T-cell (primary cell): ENCODE measurements at regions of chr3 and their contacts with region 1.

Region 1: GRCh38 chr3:179027326-179027900 is 44.2 kb downstream of the ZMAT3 start:
- DNase-seq: peak in 15 of 35 experiments; percentile 7 to 44 (median 18)
- ATAC-seq: peak; percentile 48 to 89 (median 74)
- H3K4me3 ChIP-seq: no peak overlapping the region
- H3K4me3 Mint-ChIP-seq: peak overlapping the region; percentile 22 to 57 (median 46)
- H3K27ac ChIP-seq: peak overlapping the region; percentile 22
- H3K27ac Mint-ChIP-seq: peak overlapping the region; percentile 95 to 96
- H3K4me1 ChIP-seq: peaks cover 11 to 23% of the 10 kb centered on the region in 2 experiments
- H3K4me1 Mint-ChIP-seq: peaks cover 26 to 29% (median 28%) of the 10 kb centered on the region in 3 donors
- H3K27me3 ChIP-seq: no peaks in the 10 kb centered on the region
- H3K27me3 Mint-ChIP-seq: no peaks in the 10 kb centered on the region

Region 2: DNA sequence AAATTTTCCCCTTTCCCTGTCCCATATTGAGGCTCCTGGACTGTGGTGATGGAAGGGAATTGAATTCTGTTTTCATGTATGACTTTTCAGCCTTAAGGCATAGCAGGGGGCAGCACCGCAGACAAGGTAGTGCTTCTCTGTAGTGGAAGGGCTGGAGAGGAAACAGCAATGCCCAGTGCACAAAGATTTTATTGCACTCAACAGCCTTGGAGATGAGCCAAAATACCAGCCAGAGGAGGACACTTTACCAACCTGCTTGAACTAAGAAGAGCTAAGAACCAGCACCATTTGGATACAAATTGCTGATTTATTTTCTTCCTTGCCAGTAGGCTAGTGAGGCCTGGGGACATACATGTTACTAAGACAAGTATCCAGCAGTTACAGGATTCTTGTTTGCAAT is 392.4 kb before region 1 on chr3:
- CTCF ChIA-PET with region 1: no interaction called
- POLR2A ChIA-PET with region 1: no interaction called
- DNase-seq: no peak
- ATAC-seq: no peak
- H3K4me3 ChIP-seq: no peak overlapping the region
- H3K4me3 Mint-ChIP-seq: no peak overlapping the region
- H3K27ac ChIP-seq: no peak overlapping the region
- H3K27ac Mint-ChIP-seq: no peak overlapping the region
- H3K4me1 ChIP-seq: no peaks in the 10 kb centered on the region
- H3K4me1 Mint-ChIP-seq: no peaks in the 10 kb centered on the region
- H3K27me3 ChIP-seq: no peaks in the 10 kb centered on the region
- H3K27me3 Mint-ChIP-seq: no peaks in the 10 kb centered on the region

Region 3: DNA sequence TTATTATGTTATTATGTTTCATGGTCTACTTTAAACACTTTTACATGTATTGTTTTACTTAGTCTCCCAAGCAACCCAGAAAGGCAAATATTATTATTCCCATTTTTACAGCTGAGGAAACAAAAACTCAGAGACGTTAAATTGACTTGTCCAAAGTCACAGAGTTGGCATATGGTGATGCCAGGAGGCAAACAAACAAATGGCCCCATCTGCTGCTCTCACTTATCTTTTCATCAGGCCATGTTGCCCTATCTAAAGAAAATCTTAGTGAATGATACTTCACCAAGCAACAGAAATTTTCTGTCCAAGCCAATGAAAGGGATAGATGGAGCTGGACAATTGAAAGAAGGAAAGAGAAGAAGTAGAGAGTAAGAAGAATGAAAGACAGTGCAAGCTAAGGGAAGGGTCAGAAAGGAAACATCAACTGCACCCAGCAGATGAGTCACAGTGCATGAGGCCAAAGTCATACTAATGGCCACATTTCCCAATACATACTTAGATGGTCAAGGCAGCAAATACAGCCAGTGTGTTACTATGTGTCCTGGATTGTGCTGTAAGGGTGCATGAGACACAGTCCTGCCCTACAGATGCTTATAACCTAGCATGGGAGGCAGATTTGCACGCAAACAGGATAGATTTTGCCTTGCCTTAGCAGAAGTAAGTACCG is 224.3 kb before region 1 on chr3:
- CTCF ChIA-PET with region 1: no interaction called
- POLR2A ChIA-PET with region 1: no interaction called
- DNase-seq: no peak
- ATAC-seq: no peak
- H3K4me3 ChIP-seq: no peak overlapping the region
- H3K4me3 Mint-ChIP-seq: no peak overlapping the region
- H3K27ac ChIP-seq: no peak overlapping the region
- H3K27ac Mint-ChIP-seq: no peak overlapping the region
- H3K4me1 ChIP-seq: no peaks in the 10 kb centered on the region
- H3K4me1 Mint-ChIP-seq: no peaks in the 10 kb centered on the region
- H3K27me3 ChIP-seq: no peaks in the 10 kb centered on the region
- H3K27me3 Mint-ChIP-seq: no peaks in the 10 kb centered on the region

Region 4: DNA sequence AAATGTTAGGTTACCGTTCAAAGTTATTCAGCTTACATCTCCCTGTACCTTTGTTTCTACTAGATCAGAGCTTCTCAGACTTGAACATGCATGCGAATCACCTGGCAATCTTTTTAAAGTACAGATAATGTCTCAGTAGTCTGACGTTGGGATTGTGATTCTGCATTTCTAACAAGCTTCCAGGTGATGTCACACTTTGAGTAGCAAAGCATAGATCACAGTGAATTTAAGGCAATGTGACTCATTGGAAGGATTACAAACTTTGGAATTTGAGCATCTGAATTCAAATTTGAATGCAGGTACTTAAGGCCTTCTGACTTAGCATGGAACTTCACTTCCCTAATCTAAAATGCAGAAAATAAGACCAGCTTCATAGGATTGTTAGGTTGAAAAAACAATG is 55.0 kb after region 1 on chr3:
- CTCF ChIA-PET with region 1: interaction called in 1 of 2 experiments, 14 read pairs
- POLR2A ChIA-PET with region 1: no interaction called
- DNase-seq: no peak
- ATAC-seq: no peak
- H3K4me3 ChIP-seq: no peak overlapping the region
- H3K4me3 Mint-ChIP-seq: no peak overlapping the region
- H3K27ac ChIP-seq: no peak overlapping the region
- H3K27ac Mint-ChIP-seq: no peak overlapping the region
- H3K4me1 ChIP-seq: peaks cover 0 to 8% of the 10 kb centered on the region in 2 experiments
- H3K4me1 Mint-ChIP-seq: peaks cover 9 to 13% (median 10%) of the 10 kb centered on the region in 3 donors
- H3K27me3 ChIP-seq: no peaks in the 10 kb centered on the region
- H3K27me3 Mint-ChIP-seq: no peaks in the 10 kb centered on the region